CD8-positive, alpha-beta T cell (primary cell): ENCODE measurements at regions of chr5 and their contacts with region 1.

Region 1: DNA sequence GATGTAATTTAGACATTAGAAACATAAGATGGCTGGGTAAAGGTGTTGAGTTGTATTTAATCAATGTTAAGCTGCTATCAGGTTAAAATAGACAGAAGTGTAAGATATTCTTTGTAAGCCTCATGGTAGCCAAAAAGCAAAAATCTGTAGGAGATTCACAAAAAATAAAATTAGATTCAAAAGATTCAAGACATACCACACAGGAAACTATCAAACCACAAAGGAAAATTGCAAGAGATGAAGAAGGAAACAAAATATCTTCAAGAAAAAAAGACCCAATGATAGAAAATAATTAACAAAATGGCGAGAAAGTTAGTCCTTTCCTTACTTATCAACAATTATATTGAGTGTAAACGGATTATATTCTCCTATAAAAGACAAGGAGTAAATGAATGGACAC is 15.3 kb downstream of the XRCC4 start:
- DNase-seq: peak in 1 of 9 experiments; percentile 12
- ATAC-seq: no peak
- H3K4me3 ChIP-seq: no peak overlapping the region
- H3K4me3 Mint-ChIP-seq: peak overlapping the region; percentile 5
- H3K27ac ChIP-seq: no peak overlapping the region
- H3K27ac Mint-ChIP-seq: no peak overlapping the region
- H3K4me1 ChIP-seq: peaks cover 15% of the 10 kb centered on the region
- H3K4me1 Mint-ChIP-seq: peaks cover 26% of the 10 kb centered on the region
- H3K27me3 ChIP-seq: no peaks in the 10 kb centered on the region
- H3K27me3 Mint-ChIP-seq: no peaks in the 10 kb centered on the region
- CTCF ChIP-seq: no peak

Region 2: DNA sequence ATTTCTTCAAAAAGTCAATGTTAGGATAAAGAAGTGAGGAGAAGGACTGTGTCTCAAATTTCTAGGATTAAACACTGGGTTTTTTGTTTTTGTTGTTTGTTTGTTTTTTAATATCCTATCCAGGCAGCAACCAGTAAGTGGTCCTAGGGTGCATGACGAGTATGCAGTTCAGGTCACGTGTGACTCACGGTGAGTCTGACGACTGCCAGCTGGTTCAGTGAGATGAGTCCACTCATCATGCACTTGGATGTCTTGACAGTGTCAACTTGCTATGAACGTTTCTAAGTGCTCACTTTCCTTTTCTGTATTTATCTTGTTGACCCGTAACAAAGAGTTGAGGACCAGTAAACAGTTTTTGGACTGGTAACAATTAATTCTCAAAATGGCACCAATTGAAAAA is 1088.1 kb before region 1 on chr5:
- CTCF ChIA-PET with region 1: no interaction called
- POLR2A ChIA-PET with region 1: no interaction called
- intact Hi-C with region 1: no loop called
- DNase-seq: no peak
- ATAC-seq: no peak
- H3K4me3 ChIP-seq: no peak overlapping the region
- H3K4me3 Mint-ChIP-seq: no peak overlapping the region
- H3K27ac ChIP-seq: no peak overlapping the region
- H3K27ac Mint-ChIP-seq: no peak overlapping the region
- H3K4me1 ChIP-seq: no peaks in the 10 kb centered on the region
- H3K4me1 Mint-ChIP-seq: no peaks in the 10 kb centered on the region
- H3K27me3 ChIP-seq: no peaks in the 10 kb centered on the region
- H3K27me3 Mint-ChIP-seq: no peaks in the 10 kb centered on the region
- CTCF ChIP-seq: no peak

Region 3: DNA sequence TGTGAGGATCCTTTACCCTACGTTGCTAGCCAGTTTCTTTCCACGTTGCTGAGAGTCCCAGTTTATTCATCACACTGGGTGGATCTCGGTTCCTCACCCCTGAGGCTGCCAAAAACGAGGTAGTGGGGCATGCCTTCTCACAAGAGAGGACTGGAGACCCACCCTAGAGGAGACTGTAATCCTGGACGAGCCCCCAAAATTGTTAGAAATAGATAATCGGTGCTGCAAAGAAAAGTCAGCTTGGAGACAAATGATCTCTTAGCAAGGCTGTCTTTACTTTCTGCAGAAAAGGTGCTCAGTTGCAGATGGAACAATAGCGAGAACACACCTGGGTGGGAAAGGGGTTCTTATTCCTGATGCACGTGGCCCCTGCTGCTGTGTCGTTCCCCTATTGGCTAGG is 117.2 kb before region 1 on chr5:
- CTCF ChIA-PET with region 1: no interaction called
- POLR2A ChIA-PET with region 1: no interaction called
- intact Hi-C with region 1: no loop called
- DNase-seq: no peak
- ATAC-seq: no peak
- H3K4me3 ChIP-seq: no peak overlapping the region
- H3K4me3 Mint-ChIP-seq: no peak overlapping the region
- H3K27ac ChIP-seq: no peak overlapping the region
- H3K27ac Mint-ChIP-seq: no peak overlapping the region
- H3K4me1 ChIP-seq: no peaks in the 10 kb centered on the region
- H3K4me1 Mint-ChIP-seq: no peaks in the 10 kb centered on the region
- H3K27me3 ChIP-seq: no peaks in the 10 kb centered on the region
- H3K27me3 Mint-ChIP-seq: no peaks in the 10 kb centered on the region
- CTCF ChIP-seq: no peak

Region 4: DNA sequence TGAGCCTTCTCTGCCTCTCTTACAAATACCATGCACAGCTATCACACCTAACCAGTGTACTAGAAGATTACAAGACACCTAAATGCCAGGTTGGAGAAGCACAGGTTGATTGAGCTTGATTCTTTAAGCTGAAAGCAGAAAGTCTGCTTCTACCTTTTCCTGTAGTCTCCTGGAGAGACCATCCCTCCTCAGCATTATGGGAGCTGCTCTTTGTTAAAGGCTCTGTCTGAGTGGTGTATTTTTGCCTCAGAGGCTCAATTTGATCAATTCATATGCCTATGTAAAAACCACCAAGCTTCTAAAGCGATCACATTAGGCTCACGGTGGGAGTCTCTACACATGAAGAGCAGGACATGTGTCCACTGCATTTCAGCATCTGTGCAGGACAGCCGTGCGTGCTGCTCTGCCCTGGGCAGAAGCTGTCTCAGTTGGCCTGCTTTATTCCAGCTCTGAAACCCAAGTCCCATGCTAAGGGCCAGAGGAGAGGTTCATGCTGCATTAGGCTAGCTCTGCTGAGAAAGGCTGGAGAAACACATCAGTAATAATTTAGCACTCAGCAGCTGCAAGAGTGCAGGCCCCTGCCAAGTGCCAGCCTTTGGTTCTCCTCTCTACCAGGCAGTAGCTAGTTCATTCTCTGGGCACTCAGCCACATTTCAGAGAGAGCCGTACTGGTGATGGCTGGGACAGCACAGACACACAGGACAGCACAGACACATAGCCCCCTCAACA is 57.1 kb before region 1 on chr5:
- CTCF ChIA-PET with region 1: no interaction called
- POLR2A ChIA-PET with region 1: no interaction called
- intact Hi-C with region 1: no loop called
- DNase-seq: no peak
- ATAC-seq: no peak
- H3K4me3 ChIP-seq: no peak overlapping the region
- H3K4me3 Mint-ChIP-seq: no peak overlapping the region
- H3K27ac ChIP-seq: no peak overlapping the region
- H3K27ac Mint-ChIP-seq: no peak overlapping the region
- H3K4me1 ChIP-seq: no peaks in the 10 kb centered on the region
- H3K4me1 Mint-ChIP-seq: peaks cover 3% of the 10 kb centered on the region
- H3K27me3 ChIP-seq: no peaks in the 10 kb centered on the region
- H3K27me3 Mint-ChIP-seq: no peaks in the 10 kb centered on the region
- CTCF ChIP-seq: no peak

Region 5: DNA sequence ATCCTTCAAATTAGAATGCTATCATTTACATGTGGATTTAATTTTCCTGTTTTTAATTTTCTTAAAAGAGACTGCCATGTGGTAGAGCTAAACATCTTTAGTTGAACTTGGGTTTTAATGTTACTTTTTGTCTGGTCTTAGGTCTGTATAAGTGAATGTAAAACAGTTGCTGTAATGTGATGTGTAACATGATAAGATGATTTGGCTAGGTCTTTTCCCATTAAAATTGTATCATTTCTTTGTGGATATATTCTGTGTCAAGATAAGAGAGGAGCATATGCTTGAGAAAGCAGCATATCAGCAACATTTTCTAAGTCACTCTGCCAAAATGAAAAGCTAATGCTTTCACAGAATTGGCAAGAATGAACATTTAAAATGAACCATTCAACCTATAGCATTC is 33.9 kb before region 1 on chr5:
- CTCF ChIA-PET with region 1: no interaction called
- POLR2A ChIA-PET with region 1: no interaction called
- intact Hi-C with region 1: loop called in 1 of 2 experiments (anchors 2 kb)
- DNase-seq: no peak
- ATAC-seq: no peak
- H3K4me3 ChIP-seq: no peak overlapping the region
- H3K4me3 Mint-ChIP-seq: no peak overlapping the region
- H3K27ac ChIP-seq: no peak overlapping the region
- H3K27ac Mint-ChIP-seq: no peak overlapping the region
- H3K4me1 ChIP-seq: no peaks in the 10 kb centered on the region
- H3K4me1 Mint-ChIP-seq: peaks cover 32% of the 10 kb centered on the region
- H3K27me3 ChIP-seq: no peaks in the 10 kb centered on the region
- H3K27me3 Mint-ChIP-seq: no peaks in the 10 kb centered on the region
- CTCF ChIP-seq: no peak

Region 6: GRCh38 chr5:84362061-84362720 is 1269.6 kb after region 1 on chr5:
- CTCF ChIA-PET with region 1: no interaction called
- POLR2A ChIA-PET with region 1: no interaction called
- intact Hi-C with region 1: no loop called
- DNase-seq: no peak
- ATAC-seq: no peak
- H3K4me3 ChIP-seq: no peak overlapping the region
- H3K4me3 Mint-ChIP-seq: no peak overlapping the region
- H3K27ac ChIP-seq: no peak overlapping the region
- H3K27ac Mint-ChIP-seq: no peak overlapping the region
- H3K4me1 ChIP-seq: no peaks in the 10 kb centered on the region
- H3K4me1 Mint-ChIP-seq: no peaks in the 10 kb centered on the region
- H3K27me3 ChIP-seq: no peaks in the 10 kb centered on the region
- H3K27me3 Mint-ChIP-seq: no peaks in the 10 kb centered on the region
- CTCF ChIP-seq: no peak